IMR-90 (cell line): ENCODE measurements at regions of chr6 and their contacts with region 1.

Region 1: DNA sequence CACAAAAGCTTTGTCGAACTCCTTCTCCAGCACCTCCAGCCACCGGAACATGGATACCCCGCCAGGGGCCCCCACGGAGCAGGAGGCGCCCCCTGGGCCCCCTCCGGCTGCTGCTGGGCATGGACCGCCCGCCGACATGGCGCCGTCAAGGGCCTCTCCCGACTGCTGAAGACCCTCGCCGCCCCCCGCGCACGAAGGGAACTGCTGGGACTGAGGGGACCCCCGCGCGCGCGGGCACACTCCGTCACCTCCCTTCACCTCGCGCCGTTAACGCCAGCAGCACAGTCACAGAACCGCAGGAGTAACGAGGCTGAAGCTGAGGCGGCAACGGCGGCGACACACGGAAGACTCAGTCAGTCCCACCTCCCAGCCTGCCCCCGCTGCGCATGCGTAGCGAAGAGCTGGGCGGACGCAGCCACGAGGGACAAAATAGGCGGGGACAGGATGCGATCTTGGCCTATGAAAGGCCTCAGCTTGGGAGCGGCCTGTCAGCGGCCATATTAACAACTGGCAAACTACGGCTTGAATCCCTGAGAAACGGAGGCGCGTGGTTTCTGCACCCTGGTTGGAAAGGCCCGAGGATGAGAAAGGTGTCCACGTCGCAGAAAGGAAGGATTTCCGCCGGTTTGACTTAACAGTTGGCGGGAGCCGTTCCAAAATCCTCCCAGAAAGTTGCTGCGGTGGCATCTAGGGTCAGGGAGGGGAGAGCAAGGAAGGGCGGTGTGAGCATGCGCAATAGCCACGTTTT is at the start of gene GOPC:
- DNase-seq: peak; percentile 98
- ATAC-seq: peak; percentile 97
- H3K4me3 ChIP-seq: peak within 1 kb of the TSS; percentile 90
- H3K27ac ChIP-seq: peak within 1 kb of the TSS; percentile 93
- H3K4me1 ChIP-seq: 0 out of 2 replicates have a peak, but pooled peaks cover 2% of the 10 kb centered on the region
- H3K27me3 ChIP-seq: no peaks in the 10 kb centered on the region
- CTCF ChIP-seq: peak; percentile 15; the same call in 1 of the 2 replicates
- POLR2A ChIP-seq: peak; percentile 77
- RAD21 ChIP-seq: no peak
- total RNA-seq, gene GOPC: 23.8 and 50.3 TPM in 2 replicates

Region 2: DNA sequence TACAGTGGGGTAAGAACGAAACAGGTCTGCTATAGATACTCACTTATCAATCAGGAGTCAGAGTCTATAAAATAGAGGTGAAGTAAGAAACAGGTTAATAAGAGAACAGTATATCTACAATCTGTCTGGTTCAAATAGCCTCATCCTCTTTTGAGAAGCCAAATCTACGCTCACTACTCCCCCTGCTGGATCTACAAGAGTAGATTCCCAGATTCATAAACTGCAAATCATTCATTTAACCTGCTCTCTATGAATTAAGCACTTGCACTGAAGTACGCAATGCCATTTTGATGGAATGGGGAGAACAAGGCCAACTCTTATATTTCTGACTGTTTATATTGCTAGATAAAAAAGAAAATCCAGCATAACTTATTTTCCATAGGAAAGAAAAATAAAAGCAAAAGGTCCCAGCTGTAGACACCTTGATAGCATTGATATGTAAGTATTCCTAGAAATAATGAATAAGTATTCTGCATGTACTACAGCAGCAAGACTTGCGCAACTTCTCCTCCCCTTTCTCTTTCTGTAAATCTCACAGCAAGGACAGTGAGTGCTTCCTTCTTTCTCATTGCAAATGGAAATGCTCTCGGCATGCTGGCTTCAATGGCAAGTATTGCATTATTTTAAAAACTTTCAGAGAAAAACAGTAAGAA is 633.0 kb before region 1 on chr6:
- CTCF ChIA-PET with region 1: no interaction called
- POLR2A ChIA-PET with region 1: no interaction called
- dilution Hi-C with region 1: no loop called
- in situ Hi-C with region 1: no loop called
- intact Hi-C with region 1: loop called (anchors 10 kb)
- DNase-seq: peak; percentile 50
- ATAC-seq: peak; percentile 72
- H3K4me3 ChIP-seq: no peak overlapping the region
- H3K27ac ChIP-seq: no peak overlapping the region
- H3K4me1 ChIP-seq: no peaks in the 10 kb centered on the region
- H3K27me3 ChIP-seq: no peaks in the 10 kb centered on the region
- CTCF ChIP-seq: peak; percentile 66
- POLR2A ChIP-seq: no peak
- RAD21 ChIP-seq: peak; percentile 40; the same call in 1 of the 2 replicates

Region 3: DNA sequence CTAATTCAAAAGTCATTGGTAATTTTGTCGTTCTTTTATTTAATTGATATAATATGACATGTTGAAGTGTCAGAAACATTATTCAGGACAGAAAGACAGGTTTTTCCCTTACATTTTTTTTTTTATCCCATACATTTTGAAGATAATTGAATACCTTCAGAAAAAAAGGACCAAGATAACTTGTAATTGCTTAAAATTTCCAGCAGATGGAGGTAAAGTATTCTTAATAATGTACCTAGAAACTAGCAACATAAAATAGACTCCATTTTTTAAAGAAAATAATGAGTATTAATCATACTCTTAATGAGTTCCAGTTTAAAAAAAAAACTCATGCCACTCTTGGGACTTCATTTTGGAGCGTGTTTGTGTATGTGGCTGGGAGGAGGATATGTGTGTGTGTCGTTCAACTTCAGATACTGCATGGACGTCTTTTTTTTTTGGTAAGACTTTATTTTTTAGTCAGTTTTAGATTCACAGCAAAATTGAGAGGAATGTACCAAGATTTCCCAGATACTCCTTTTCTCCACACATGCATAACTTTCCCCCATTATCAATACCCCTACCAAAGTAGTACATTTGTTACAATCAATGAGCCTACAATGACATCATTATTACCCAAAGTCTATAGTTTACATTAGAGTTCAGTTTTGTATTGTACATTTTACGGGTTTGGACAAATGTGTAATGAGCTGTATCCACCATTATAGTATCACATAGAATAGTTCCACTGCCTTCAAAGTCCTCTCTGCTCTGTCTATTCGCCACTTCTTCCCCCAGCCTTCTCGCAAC is 256.0 kb before region 1 on chr6:
- CTCF ChIA-PET with region 1: no interaction called
- POLR2A ChIA-PET with region 1: no interaction called
- dilution Hi-C with region 1: no loop called
- in situ Hi-C with region 1: loop called (anchors 5 kb)
- intact Hi-C with region 1: loop called (anchors 1 kb)
- DNase-seq: peak; percentile 28
- ATAC-seq: peak; percentile 67
- H3K4me3 ChIP-seq: no peak overlapping the region
- H3K27ac ChIP-seq: no peak overlapping the region
- H3K4me1 ChIP-seq: no peaks in the 10 kb centered on the region
- H3K27me3 ChIP-seq: no peaks in the 10 kb centered on the region; the same call in 1 of the 2 replicates
- CTCF ChIP-seq: peak; percentile 63
- POLR2A ChIP-seq: no peak
- RAD21 ChIP-seq: peak; percentile 59

Region 4: DNA sequence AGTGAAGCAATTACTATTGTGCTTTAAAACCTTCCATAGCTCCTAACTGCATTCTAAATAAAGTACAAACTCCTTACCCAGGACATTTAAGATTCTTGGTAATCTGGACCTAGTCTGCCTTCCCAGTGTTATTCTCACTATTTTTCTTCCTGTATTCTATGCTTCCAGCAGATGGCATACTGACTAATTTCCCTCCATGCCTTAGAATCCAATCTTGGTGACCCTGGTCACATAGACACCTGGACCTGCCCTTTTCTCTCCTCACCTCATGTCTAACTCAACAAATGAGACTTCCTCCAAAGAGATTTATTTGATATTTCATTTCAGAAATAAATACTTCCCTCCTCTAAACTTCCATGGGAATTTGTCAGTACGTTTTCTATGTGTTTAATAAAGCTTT is 202.4 kb before region 1 on chr6:
- CTCF ChIA-PET with region 1: interaction called, 10 read pairs
- POLR2A ChIA-PET with region 1: no interaction called
- dilution Hi-C with region 1: no loop called
- in situ Hi-C with region 1: no loop called
- intact Hi-C with region 1: loop called (anchors 1 kb)
- DNase-seq: peak; percentile 4
- ATAC-seq: no peak
- H3K4me3 ChIP-seq: no peak overlapping the region
- H3K27ac ChIP-seq: no peak overlapping the region
- H3K4me1 ChIP-seq: no peaks in the 10 kb centered on the region
- H3K27me3 ChIP-seq: no peaks in the 10 kb centered on the region; the same call in 1 of the 2 replicates
- CTCF ChIP-seq: peak; percentile 43
- POLR2A ChIP-seq: no peak
- RAD21 ChIP-seq: peak; percentile 40

Region 5: DNA sequence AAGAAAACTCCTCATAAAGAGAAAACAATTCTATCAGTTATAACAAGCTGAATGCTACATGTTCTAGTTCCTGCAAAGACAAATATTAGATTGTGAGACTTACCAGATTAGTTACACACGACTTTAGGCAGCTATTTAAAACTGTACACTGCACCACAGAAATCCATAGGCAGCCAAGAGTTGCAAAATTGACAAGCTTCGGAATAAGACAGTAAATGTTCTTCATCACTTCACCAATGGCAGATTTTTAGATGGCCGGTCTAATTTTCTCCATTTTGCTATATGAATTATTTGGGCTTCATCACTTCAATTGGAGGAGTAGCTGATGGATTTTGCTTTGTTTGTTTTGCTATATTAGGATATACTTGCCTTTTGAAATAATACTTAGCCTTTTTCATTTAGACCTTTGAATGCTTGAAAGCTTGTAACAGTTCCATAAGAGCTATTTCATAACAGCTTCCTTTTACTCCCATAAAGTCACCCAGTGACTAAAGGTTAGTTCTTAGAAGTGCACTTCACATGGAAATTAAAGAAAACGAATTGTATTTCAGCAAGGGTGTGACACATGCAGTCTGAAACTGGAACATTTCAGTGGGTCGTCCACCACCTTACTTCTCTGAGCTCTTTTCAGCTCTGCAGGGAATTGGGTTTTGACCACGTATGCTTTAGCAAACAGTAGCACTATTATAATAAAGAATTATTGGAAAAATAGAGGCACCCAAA is 176.7 kb before region 1 on chr6 and contains the start of gene ROS1:
- CTCF ChIA-PET with region 1: no interaction called
- POLR2A ChIA-PET with region 1: interaction called, 21 read pairs
- dilution Hi-C with region 1: no loop called
- in situ Hi-C with region 1: no loop called
- intact Hi-C with region 1: no loop called
- DNase-seq: no peak
- ATAC-seq: no peak
- H3K4me3 ChIP-seq: no peak within 1 kb of the TSS
- H3K27ac ChIP-seq: no peak within 1 kb of the TSS
- H3K4me1 ChIP-seq: no peaks in the 10 kb centered on the region
- H3K27me3 ChIP-seq: peaks cover 1% of the 10 kb centered on the region; the same call in 1 of the 2 replicates
- CTCF ChIP-seq: no peak
- POLR2A ChIP-seq: no peak
- RAD21 ChIP-seq: no peak
- total RNA-seq, gene ROS1: under 0.01 TPM in 2 replicates

Region 6: GRCh38 chr6:117568831-117569410 is 33.4 kb before region 1 on chr6:
- CTCF ChIA-PET with region 1: interaction called, 5 read pairs
- POLR2A ChIA-PET with region 1: interaction called, 8 read pairs
- dilution Hi-C with region 1: no loop called
- in situ Hi-C with region 1: no loop called
- intact Hi-C with region 1: loop called (anchors 1 kb)
- DNase-seq: no peak
- ATAC-seq: no peak
- H3K4me3 ChIP-seq: no peak overlapping the region
- H3K27ac ChIP-seq: no peak overlapping the region
- H3K4me1 ChIP-seq: no peaks in the 10 kb centered on the region
- H3K27me3 ChIP-seq: no peaks in the 10 kb centered on the region
- CTCF ChIP-seq: no peak
- POLR2A ChIP-seq: no peak
- RAD21 ChIP-seq: no peak

Region 7: DNA sequence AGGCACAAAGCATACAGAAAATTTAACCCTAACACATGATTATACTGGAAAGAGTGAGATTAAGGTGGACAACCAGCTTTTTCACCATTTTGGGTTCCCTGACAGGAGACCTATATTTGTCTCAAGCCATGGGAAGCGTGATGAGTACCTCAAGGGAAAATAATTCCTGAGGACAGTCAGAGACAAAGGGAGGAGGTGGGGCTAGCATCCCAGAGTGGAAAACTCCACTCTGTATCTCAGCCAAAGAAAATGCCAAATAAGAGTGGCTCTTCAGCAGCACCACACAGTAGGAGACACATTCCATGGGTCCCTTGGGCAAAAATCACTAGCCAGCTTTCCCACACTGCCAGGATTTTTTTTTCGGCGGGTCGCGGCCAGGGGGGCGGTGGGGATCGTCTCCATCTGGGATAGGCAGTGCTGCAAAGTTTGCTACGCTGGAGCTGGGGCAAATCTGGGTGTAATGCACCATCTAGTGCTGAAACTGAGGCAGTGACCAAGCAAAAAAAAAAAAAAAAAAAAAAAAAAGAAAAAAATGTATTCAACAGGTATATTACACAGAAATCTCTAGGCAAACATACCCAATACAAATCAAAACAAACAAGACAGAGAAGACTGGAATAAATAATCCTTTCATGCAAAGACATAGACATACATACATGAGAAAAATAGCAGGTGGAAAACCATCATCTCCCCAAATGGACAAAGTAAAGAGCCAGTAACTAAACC is 227.4 kb after region 1 on chr6:
- CTCF ChIA-PET with region 1: no interaction called
- POLR2A ChIA-PET with region 1: no interaction called
- dilution Hi-C with region 1: no loop called
- in situ Hi-C with region 1: no loop called
- intact Hi-C with region 1: loop called (anchors 5 kb)
- DNase-seq: peak; percentile 30
- ATAC-seq: peak; percentile 57
- H3K4me3 ChIP-seq: peak overlapping the region; percentile 48
- H3K27ac ChIP-seq: no peak overlapping the region
- H3K4me1 ChIP-seq: no peaks in the 10 kb centered on the region
- H3K27me3 ChIP-seq: no peaks in the 10 kb centered on the region
- CTCF ChIP-seq: peak; percentile 56
- POLR2A ChIP-seq: no peak
- RAD21 ChIP-seq: peak; percentile 61

Region 8: GRCh38 chr6:117880824-117881223 is 278.5 kb after region 1 on chr6:
- CTCF ChIA-PET with region 1: no interaction called
- POLR2A ChIA-PET with region 1: no interaction called
- dilution Hi-C with region 1: no loop called
- in situ Hi-C with region 1: no loop called
- intact Hi-C with region 1: no loop called
- DNase-seq: no peak
- ATAC-seq: no peak
- H3K4me3 ChIP-seq: no peak overlapping the region
- H3K27ac ChIP-seq: no peak overlapping the region
- H3K4me1 ChIP-seq: no peaks in the 10 kb centered on the region
- H3K27me3 ChIP-seq: no peaks in the 10 kb centered on the region
- CTCF ChIP-seq: no peak
- POLR2A ChIP-seq: no peak
- RAD21 ChIP-seq: no peak